ENCODE measurements at regions of chr5 and their contacts with region 1.

Region 1: DNA sequence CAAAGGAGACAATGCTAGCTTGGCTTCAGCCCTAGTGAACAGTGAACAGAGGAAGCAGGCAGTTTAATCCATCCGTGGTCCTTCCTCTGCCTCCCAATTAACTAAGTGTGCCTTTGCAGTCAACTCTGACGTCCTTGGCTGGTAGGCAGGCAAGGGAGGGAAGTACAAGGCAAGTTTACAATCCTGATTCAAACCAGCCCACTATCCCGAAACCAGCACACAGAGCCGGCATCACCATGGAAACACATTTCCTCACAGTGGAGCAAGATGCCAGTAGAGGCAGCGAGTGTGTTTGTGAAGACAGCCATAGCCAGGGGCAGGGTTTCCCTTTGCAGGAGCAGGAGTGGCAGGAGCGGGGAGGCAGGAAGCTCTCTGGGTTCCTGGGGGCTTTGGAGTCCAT is 73.9 kb downstream of the GOLPH3 start:
- DNase-seq: peak in 1 of 7 donors; percentile 69
- H3K4me3 ChIP-seq: no peak overlapping the region
- H3K27ac ChIP-seq: peak overlapping the region in 2 of 5 donors; percentile 45 to 57
- H3K4me1 ChIP-seq: peaks cover 0 to 7% of the 10 kb centered on the region in 2 donors
- H3K27me3 ChIP-seq: no peaks in the 10 kb centered on the region
- CTCF ChIP-seq: no peak
- POLR2A ChIP-seq: no peak

Region 2: DNA sequence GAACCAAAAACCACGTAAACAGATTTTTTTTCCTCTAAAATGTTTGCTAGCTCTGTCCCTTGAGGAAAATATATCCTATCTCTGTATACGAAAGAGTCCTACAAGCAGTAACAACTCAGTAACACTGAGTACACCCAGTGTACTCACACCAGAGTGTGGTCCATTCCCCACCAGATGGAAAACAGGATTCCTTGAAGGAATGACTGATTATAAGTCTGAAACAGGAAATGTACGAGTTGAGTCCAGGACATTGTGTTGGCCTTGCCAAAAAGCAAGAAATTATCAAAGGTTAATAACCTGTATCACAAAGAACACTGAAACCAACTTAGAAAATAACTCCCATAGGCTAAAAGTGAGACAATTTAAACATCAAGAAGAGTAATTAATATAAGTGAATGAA is 53.5 kb after region 1 on chr5:
- intact Hi-C with region 1: loop called in 1 of 2 experiments (anchors 10 kb)
- DNase-seq: no peak
- H3K4me3 ChIP-seq: no peak overlapping the region
- H3K27ac ChIP-seq: no peak overlapping the region
- H3K4me1 ChIP-seq: peaks cover 22 to 69% of the 10 kb centered on the region in 2 donors
- H3K27me3 ChIP-seq: no peaks in the 10 kb centered on the region
- CTCF ChIP-seq: no peak
- POLR2A ChIP-seq: no peak